Head of caudate nucleus (tissue), 42 donors: ENCODE measurements at regions of chrX and their contacts with region 1.

Region 1: GRCh38 chrX:15686818-15687685 is 22.4 kb upstream of the CLTRN start:
- DNase-seq: peak in 37 of 42 donors; percentile 6 to 79 (median 53)

Region 2: GRCh38 chrX:15973299-15973698 is 286.2 kb after region 1 on chrX:
- intact Hi-C with region 1: loop called (anchors 10 kb)
- DNase-seq: peak in 32 of 42 donors; percentile 6 to 74 (median 41)